ENCODE measurements at regions of chr19 and their contacts with region 1.

Region 1: GRCh38 chr19:16584248-16585141 is 12.3 kb upstream of the SLC35E1 start:
- DNase-seq: peak; percentile 94
- H3K4me3 ChIP-seq: peak overlapping the region; percentile 73
- H3K27ac ChIP-seq: peak overlapping the region; percentile 97
- H3K4me1 ChIP-seq: peaks cover 82% of the 10 kb centered on the region
- CTCF ChIP-seq: no peak

Region 2: DNA sequence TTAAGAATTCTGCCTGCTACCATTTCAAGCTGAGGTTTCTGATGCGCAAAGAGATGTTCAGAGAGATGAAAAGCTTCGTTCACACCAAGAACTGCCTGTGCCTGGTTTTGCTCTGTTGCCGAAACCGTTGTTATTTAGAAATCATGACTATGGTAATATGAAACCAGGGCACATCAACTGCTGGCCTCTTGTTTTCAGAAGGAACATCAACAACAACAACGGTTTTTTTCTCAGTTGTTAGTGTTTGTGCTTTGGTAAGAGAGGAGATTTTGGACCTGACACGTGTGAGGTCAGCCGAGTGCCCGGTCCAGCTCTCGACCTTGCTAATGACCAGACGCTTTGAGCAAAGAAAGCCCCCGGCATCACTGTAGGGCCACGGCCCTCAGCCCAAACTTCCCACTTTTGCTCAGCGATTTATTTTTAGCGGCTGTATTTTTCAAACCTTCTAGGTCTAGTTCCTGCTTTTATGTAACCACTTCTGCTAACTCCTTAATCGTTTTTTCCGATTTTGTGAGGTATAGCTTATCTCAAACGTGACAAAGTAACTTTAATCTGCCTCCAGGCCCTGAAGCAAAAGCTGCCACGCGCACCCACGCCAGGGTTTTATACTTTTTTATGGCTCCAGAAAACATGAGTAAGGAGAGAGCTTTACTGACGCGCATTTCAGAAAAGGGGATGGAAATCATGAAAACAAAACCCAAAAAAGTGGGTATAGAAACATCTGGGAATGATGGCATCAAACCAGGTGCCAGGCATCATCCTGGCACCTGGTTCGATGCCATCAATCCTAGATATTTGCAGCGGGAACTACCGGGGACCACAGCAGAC is 217.8 kb before region 1 on chr19:
- CTCF ChIA-PET with region 1: no interaction called
- POLR2A ChIA-PET with region 1: no interaction called
- intact Hi-C with region 1: no loop called
- DNase-seq: peak; percentile 74
- H3K4me3 ChIP-seq: peak overlapping the region; percentile 52
- H3K27ac ChIP-seq: peak overlapping the region; percentile 76
- H3K4me1 ChIP-seq: peaks cover 64% of the 10 kb centered on the region
- CTCF ChIP-seq: no peak

Region 3: GRCh38 chr19:16446724-16447368 is 137.6 kb before region 1 on chr19:
- CTCF ChIA-PET with region 1: interaction called, 4 read pairs
- POLR2A ChIA-PET with region 1: interaction called, 4 read pairs
- intact Hi-C with region 1: loop called (anchors 1 kb)
- DNase-seq: peak; percentile 81
- H3K4me3 ChIP-seq: peak overlapping the region; percentile 48
- H3K27ac ChIP-seq: peak overlapping the region; percentile 96
- H3K4me1 ChIP-seq: peaks cover 95% of the 10 kb centered on the region
- CTCF ChIP-seq: no peak

Region 4: DNA sequence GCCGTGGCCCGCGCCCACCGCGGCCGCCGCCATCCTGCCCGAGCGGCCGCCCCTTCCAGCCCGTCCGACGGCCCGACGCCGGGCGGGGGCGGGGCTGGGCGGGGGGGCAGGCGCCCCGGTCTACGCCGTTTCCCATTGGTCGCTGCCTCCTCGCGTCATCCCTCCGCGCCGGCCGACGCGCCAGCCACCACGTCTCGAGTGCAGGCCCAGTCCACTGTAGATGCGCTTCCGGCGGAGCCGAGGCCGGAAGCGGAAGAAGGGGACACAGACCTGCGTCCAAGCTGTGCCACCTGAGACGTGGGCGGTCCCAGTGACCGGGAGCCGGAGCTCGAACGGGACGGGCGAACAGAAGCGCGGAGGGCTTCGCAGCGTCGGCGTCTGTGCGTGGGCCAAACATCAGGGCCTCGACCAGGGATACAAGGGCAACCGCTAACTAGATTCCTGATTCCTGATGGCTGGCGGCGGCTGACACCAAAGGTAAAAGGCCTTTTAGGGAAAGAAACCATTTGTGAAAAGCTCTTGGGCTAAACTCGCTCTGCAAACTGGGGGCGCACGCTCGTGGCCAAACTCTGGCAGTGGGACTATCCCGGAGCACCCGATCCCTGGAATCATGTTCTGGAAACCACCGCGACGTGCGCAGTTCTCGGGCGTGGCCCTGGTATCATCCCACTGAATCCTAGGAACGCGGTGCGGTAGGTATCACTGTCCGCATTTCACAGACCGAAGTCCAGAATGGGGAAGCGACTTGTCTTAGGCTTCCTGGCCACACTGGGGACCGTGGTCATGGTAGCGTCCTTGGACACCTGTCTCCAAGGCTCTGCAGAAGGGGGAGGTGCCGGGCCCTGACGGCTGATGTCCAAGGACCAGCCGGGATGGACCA is 11.9 kb before region 1 on chr19 and contains the start of gene SLC35E1:
- CTCF ChIA-PET with region 1: interaction called, 4 read pairs
- POLR2A ChIA-PET with region 1: interaction called, 11 read pairs
- intact Hi-C with region 1: loop called (anchors 1 kb)
- DNase-seq: peak; percentile 95
- H3K4me3 ChIP-seq: peak within 1 kb of the TSS; percentile 83
- H3K27ac ChIP-seq: peak within 1 kb of the TSS; percentile 26
- H3K4me1 ChIP-seq: peaks cover 26% of the 10 kb centered on the region
- CTCF ChIP-seq: no peak
- total RNA-seq, gene SLC35E1: 17.3 and 21.1 TPM in 2 replicates

Region 5: GRCh38 chr19:16628183-16628983 is 43.9 kb after region 1 on chr19 and contains the start of gene MED26:
- CTCF ChIA-PET with region 1: interaction called, 3 read pairs
- POLR2A ChIA-PET with region 1: interaction called, 10 read pairs
- intact Hi-C with region 1: loop called (anchors 1 kb)
- DNase-seq: peak; percentile 96
- H3K4me3 ChIP-seq: peak within 1 kb of the TSS; percentile 99
- H3K27ac ChIP-seq: peak within 1 kb of the TSS; percentile 96
- H3K4me1 ChIP-seq: peaks cover 52% of the 10 kb centered on the region
- CTCF ChIP-seq: no peak
- total RNA-seq, gene MED26: 17.2 and 19.4 TPM in 2 replicates

Region 6: GRCh38 chr19:16897154-16897855 is 312.8 kb after region 1 on chr19:
- CTCF ChIA-PET with region 1: no interaction called
- POLR2A ChIA-PET with region 1: no interaction called
- intact Hi-C with region 1: loop called (anchors 5 kb)
- DNase-seq: peak; percentile 83
- H3K4me3 ChIP-seq: peak overlapping the region; percentile 75
- H3K27ac ChIP-seq: no peak overlapping the region
- H3K4me1 ChIP-seq: peaks cover 32% of the 10 kb centered on the region
- CTCF ChIP-seq: no peak

Measured in OCI-LY7 (cell line).